ENCODE measurements at regions of chr1 and their contacts with region 1.

Region 1: GRCh38 chr1:206583707-206584648 is 28.3 kb downstream of the EIF2D start:
- DNase-seq: peak; percentile 93
- ATAC-seq: peak; percentile 31
- H3K4me3 Mint-ChIP-seq: peak overlapping the region; percentile 65
- H3K27ac Mint-ChIP-seq: peak overlapping the region; percentile 99
- H3K4me1 Mint-ChIP-seq: peaks cover 87% of the 10 kb centered on the region
- H3K27me3 Mint-ChIP-seq: no peaks in the 10 kb centered on the region

Region 2: GRCh38 chr1:206461602-206462455 is 122.1 kb before region 1 on chr1:
- CTCF ChIA-PET with region 1: interaction called, 10 read pairs
- POLR2A ChIA-PET with region 1: no interaction called
- intact Hi-C with region 1: no loop called
- DNase-seq: peak; percentile 85
- ATAC-seq: peak; percentile 57
- H3K4me3 Mint-ChIP-seq: no peak overlapping the region
- H3K27ac Mint-ChIP-seq: peak overlapping the region; percentile 39
- H3K4me1 Mint-ChIP-seq: peaks cover 49% of the 10 kb centered on the region
- H3K27me3 Mint-ChIP-seq: no peaks in the 10 kb centered on the region

Region 3: GRCh38 chr1:206496131-206496793 is 87.7 kb before region 1 on chr1:
- CTCF ChIA-PET with region 1: interaction called, 49 read pairs
- POLR2A ChIA-PET with region 1: interaction called, 4 read pairs
- intact Hi-C with region 1: loop called in 1 of 2 experiments (anchors 5 kb)
- DNase-seq: no peak
- ATAC-seq: no peak
- H3K4me3 Mint-ChIP-seq: no peak overlapping the region
- H3K27ac Mint-ChIP-seq: peak overlapping the region; percentile 49
- H3K4me1 Mint-ChIP-seq: peaks cover 5% of the 10 kb centered on the region
- H3K27me3 Mint-ChIP-seq: no peaks in the 10 kb centered on the region

Region 4: DNA sequence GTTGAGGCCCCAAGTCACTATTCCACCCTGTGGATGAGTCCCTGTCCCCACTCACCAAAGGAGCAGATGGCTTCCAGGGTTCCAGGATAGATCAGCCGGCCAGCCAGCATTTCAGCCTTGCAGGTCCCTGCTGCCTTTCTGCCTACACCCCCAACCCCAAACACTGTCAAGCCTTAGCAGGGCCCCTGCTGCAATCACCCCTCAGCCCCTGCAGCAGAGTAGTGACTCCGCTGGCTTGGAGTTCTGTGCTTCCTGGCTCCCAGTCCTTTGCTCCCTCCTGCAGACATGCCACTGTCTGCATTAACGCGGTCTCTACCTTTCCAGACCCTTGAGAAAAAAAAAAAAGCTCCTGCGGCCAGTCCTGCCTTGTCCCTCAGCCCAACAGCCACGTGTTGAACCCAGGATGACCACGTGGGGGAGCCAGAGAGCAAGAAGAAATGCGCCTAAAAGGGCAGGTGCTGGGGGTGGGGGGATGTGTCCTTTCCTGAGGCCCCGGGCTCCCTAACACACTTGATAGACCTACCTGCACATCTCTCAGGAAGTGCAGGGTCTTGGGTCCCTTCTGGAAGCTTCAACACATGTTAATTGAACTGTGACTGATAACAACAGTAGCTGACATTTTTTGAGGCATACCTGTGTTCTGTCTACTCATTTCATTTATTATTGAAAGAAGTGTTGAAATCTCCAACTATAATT is 39.3 kb before region 1 on chr1:
- CTCF ChIA-PET with region 1: interaction called, 621 read pairs
- POLR2A ChIA-PET with region 1: interaction called, 5 read pairs
- intact Hi-C with region 1: loop called (anchors 1 kb)
- DNase-seq: peak; percentile 90
- ATAC-seq: peak; percentile 80
- H3K4me3 Mint-ChIP-seq: no peak overlapping the region
- H3K27ac Mint-ChIP-seq: peak overlapping the region; percentile 55
- H3K4me1 Mint-ChIP-seq: peaks cover 26% of the 10 kb centered on the region
- H3K27me3 Mint-ChIP-seq: no peaks in the 10 kb centered on the region

Region 5: GRCh38 chr1:206563367-206564207 is 20.4 kb before region 1 on chr1:
- CTCF ChIA-PET with region 1: interaction called, 621 read pairs
- POLR2A ChIA-PET with region 1: interaction called, 129 read pairs
- intact Hi-C with region 1: loop called in 1 of 2 experiments (anchors 1 kb)
- DNase-seq: peak; percentile 22
- ATAC-seq: peak; percentile 4
- H3K4me3 Mint-ChIP-seq: peak overlapping the region; percentile 95
- H3K27ac Mint-ChIP-seq: peak overlapping the region; percentile 99
- H3K4me1 Mint-ChIP-seq: peaks cover 87% of the 10 kb centered on the region
- H3K27me3 Mint-ChIP-seq: no peaks in the 10 kb centered on the region